H1 (cell line): ENCODE measurements at regions of chr10 and their contacts with region 1.

Region 1: GRCh38 chr10:80144067-80144695 is 11.7 kb downstream of the PLAC9 start:
- DNase-seq: no peak
- H3K4me3 ChIP-seq: no peak overlapping the region
- H3K27ac ChIP-seq: no peak overlapping the region
- H3K4me1 ChIP-seq: peaks cover 0 to 3% (median 0%) of the 10 kb centered on the region in 4 experiments; a peak in 1 of 7 replicates
- H3K27me3 ChIP-seq: no peaks in the 10 kb centered on the region
- CTCF ChIP-seq: no peak
- EP300 ChIP-seq: no peak
- POLR2A ChIP-seq: no peak
- RAD21 ChIP-seq: no peak

Region 2: GRCh38 chr10:80122746-80123145 is 21.4 kb before region 1 on chr10:
- CTCF ChIA-PET with region 1: interaction called, 14 read pairs
- POLR2A ChIA-PET with region 1: no interaction called
- DNase-seq: no peak
- H3K4me3 ChIP-seq: no peak overlapping the region
- H3K27ac ChIP-seq: no peak overlapping the region
- H3K4me1 ChIP-seq: 0 out of 7 replicates have a peak, but pooled peaks cover 0 to 2% (median 0%) of the 10 kb centered on the region in 4 experiments
- H3K27me3 ChIP-seq: no peaks in the 10 kb centered on the region
- CTCF ChIP-seq: no peak
- EP300 ChIP-seq: no peak
- POLR2A ChIP-seq: no peak
- RAD21 ChIP-seq: no peak

Region 3: GRCh38 chr10:80158598-80159127 is 14.5 kb after region 1 on chr10:
- CTCF ChIA-PET with region 1: interaction called, 50 read pairs
- POLR2A ChIA-PET with region 1: interaction called, 6 read pairs
- DNase-seq: no peak
- H3K4me3 ChIP-seq: no peak overlapping the region
- H3K27ac ChIP-seq: no peak overlapping the region
- H3K4me1 ChIP-seq: peaks cover 2 to 8% (median 6%) of the 10 kb centered on the region in 4 experiments; a peak in 5 of 7 replicates
- H3K27me3 ChIP-seq: no peaks in the 10 kb centered on the region
- CTCF ChIP-seq: no peak
- EP300 ChIP-seq: no peak
- POLR2A ChIP-seq: no peak
- RAD21 ChIP-seq: no peak

Region 4: DNA sequence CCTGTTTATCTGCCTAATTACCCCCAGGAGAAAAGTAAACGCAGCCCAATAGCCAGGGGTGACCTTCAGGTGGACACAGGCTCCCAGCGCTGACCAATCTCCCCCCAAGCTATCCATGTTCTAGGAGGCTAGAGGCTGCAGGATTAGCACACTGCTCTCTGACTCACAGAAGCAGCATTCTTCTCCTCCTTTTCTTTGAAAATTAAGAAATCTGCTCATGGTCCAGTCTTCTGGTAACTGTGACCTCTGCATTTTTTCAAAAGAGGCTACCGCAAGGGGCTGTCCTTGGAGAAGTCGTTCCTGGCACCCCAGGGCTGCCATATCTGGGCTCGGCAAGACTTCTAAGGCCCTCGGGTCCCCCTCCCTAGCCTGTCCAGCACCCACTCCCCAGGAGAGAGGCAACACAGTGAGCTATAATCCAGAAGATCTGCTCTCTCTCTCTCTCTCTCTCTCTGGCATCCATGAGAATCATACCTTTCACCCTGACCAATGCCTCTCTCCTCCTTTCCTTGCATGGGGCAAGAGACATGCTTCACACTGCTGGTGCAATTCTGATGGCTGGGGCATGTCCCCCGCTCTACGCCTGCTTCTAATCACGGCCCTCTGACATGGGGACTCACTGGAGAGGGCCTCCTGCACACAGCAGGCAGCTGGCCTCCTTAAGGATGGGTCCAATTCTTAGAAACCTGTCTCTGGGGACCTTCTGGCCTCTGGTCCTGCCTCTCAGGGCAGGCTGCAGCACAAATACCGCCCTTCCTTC is 33.8 kb after region 1 on chr10:
- CTCF ChIA-PET with region 1: interaction called, 27 read pairs
- POLR2A ChIA-PET with region 1: no interaction called
- DNase-seq: no peak
- H3K4me3 ChIP-seq: no peak overlapping the region
- H3K27ac ChIP-seq: no peak overlapping the region
- H3K4me1 ChIP-seq: peaks cover 0 to 5% (median 2%) of the 10 kb centered on the region in 4 experiments; a peak in 3 of 7 replicates
- H3K27me3 ChIP-seq: no peaks in the 10 kb centered on the region
- CTCF ChIP-seq: no peak
- EP300 ChIP-seq: no peak
- POLR2A ChIP-seq: no peak
- RAD21 ChIP-seq: no peak

Region 5: GRCh38 chr10:80211786-80212185 is 67.6 kb after region 1 on chr10:
- CTCF ChIA-PET with region 1: interaction called, 16 read pairs
- POLR2A ChIA-PET with region 1: interaction called, 3 read pairs
- DNase-seq: no peak
- H3K4me3 ChIP-seq: no peak overlapping the region
- H3K27ac ChIP-seq: no peak overlapping the region
- H3K4me1 ChIP-seq: peaks cover 0 to 5% (median 1%) of the 10 kb centered on the region in 4 experiments; a peak in 4 of 7 replicates
- H3K27me3 ChIP-seq: peaks cover 0 to 10% (median 5%) of the 10 kb centered on the region in 4 experiments; a peak in 3 of 7 replicates
- CTCF ChIP-seq: no peak
- EP300 ChIP-seq: no peak
- POLR2A ChIP-seq: no peak
- RAD21 ChIP-seq: no peak

Region 6: DNA sequence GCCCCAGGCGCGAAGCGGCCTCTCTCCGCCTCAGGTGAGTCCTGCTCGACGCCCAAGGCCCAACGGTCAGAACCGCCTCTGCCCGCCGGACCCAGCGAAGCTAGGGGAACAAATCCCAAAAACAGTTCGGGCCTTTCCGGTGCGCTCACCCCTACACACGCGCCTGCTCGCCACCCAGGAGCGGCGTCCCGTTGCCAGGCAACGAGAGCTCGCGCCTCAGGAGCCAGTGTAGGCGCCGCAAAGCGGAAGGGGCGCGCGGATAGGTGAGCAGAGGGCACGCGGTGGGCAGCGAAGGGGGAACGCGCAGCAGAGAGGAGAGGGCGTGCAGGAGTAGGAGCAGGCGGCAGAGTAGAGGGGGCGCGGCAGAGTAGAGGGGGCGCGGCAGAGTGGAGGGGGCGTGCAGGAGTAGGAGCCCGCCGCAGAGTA is 212.4 kb after region 1 on chr10 and contains the starts of genes DYDC1 and DYDC2:
- CTCF ChIA-PET with region 1: no interaction called
- POLR2A ChIA-PET with region 1: no interaction called
- DNase-seq: peak; percentile 78 to 89
- H3K4me3 ChIP-seq: peak within 1 kb of the TSS; percentile 40 to 61 (median 48)
- H3K27ac ChIP-seq: 0 out of 2 replicates have a peak within 1 kb of the TSS, but pooled peaks have one; percentile 7
- H3K4me1 ChIP-seq: peaks cover 0 to 11% (median 3%) of the 10 kb centered on the region in 4 experiments; a peak in 6 of 7 replicates
- H3K27me3 ChIP-seq: peaks cover 0 to 4% (median 0%) of the 10 kb centered on the region in 4 experiments; a peak in 2 of 7 replicates
- CTCF ChIP-seq: no peak
- EP300 ChIP-seq: no peak
- POLR2A ChIP-seq: no peak
- RAD21 ChIP-seq: no peak
- total RNA-seq, gene DYDC1: 0.44 TPM in 1 of 2 replicates, not detected in the other
- total RNA-seq, gene DYDC2: 3.5 and 5.2 TPM in 2 replicates